Activated B cell treated with CpG ODN at 0.5 μM for 24 hours (primary cell): ENCODE measurements at regions of chr18 and their contacts with region 1.

Region 1: DNA sequence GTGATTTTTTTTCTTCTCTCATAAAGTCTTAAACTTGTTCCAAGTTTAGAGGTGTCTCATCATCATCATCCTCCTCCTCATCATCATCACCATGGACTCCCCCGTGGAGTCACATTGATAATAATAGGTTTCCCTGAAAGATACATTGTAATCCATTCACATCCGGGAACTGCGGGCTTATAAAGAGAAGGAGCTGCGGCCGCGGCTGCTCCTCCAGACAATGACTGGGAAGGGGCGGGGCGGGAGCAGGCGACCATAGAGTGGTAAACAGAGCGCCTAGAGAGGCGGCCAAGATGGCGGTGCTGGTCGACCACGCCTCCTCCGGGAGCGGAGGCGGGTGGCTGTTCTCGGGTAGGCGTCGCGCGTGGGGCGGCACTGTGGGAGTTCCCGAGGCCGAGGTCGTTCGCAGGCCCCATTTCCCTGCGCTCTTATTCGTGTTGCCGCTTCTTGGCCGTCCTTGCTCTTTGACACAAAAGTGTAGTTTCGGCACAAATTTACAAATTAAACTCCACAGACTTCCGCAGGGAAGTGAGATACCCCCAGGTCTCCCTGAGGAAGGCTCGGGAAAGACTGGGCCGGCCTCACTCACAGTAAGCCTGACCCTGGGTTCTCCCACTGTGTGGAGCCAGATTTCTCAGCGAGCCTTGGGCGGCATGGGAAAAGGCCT is 1.8 kb upstream of the TCF4 start:
- DNase-seq: peak; percentile 84
- ATAC-seq: peak; percentile 86
- H3K4me3 Mint-ChIP-seq: peak overlapping the region; percentile 89
- H3K27ac Mint-ChIP-seq: peak overlapping the region; percentile 89
- H3K4me1 Mint-ChIP-seq: peaks cover 38% of the 10 kb centered on the region
- H3K27me3 Mint-ChIP-seq: peaks cover 4% of the 10 kb centered on the region
- CTCF ChIP-seq: no peak

Region 2: GRCh38 chr18:55119434-55119833 is 470.3 kb before region 1 on chr18:
- CTCF ChIA-PET with region 1: no interaction called
- POLR2A ChIA-PET with region 1: interaction called, 16 read pairs
- intact Hi-C with region 1: no loop called
- DNase-seq: no peak
- ATAC-seq: no peak
- H3K4me3 Mint-ChIP-seq: no peak overlapping the region
- H3K27ac Mint-ChIP-seq: no peak overlapping the region
- H3K4me1 Mint-ChIP-seq: peaks cover 21% of the 10 kb centered on the region
- H3K27me3 Mint-ChIP-seq: no peaks in the 10 kb centered on the region
- CTCF ChIP-seq: no peak

Region 3: GRCh38 chr18:55422456-55423180 is 167.1 kb before region 1 on chr18:
- CTCF ChIA-PET with region 1: no interaction called
- POLR2A ChIA-PET with region 1: interaction called, 6 read pairs
- intact Hi-C with region 1: loop called (anchors 1 kb)
- DNase-seq: no peak
- ATAC-seq: no peak
- H3K4me3 Mint-ChIP-seq: peak overlapping the region; percentile 84
- H3K27ac Mint-ChIP-seq: peak overlapping the region; percentile 75
- H3K4me1 Mint-ChIP-seq: peaks cover 64% of the 10 kb centered on the region
- H3K27me3 Mint-ChIP-seq: peaks cover 2% of the 10 kb centered on the region
- CTCF ChIP-seq: no peak

Region 4: GRCh38 chr18:55509631-55510324 is 80.0 kb before region 1 on chr18:
- CTCF ChIA-PET with region 1: no interaction called
- POLR2A ChIA-PET with region 1: interaction called, 6 read pairs
- intact Hi-C with region 1: loop called (anchors 1 kb)
- DNase-seq: no peak
- ATAC-seq: peak; percentile 82
- H3K4me3 Mint-ChIP-seq: peak overlapping the region; percentile 61
- H3K27ac Mint-ChIP-seq: peak overlapping the region; percentile 68
- H3K4me1 Mint-ChIP-seq: peaks cover 56% of the 10 kb centered on the region
- H3K27me3 Mint-ChIP-seq: no peaks in the 10 kb centered on the region
- CTCF ChIP-seq: no peak

Region 5: GRCh38 chr18:55605733-55606338 is 16.1 kb after region 1 on chr18:
- CTCF ChIA-PET with region 1: no interaction called
- POLR2A ChIA-PET with region 1: interaction called, 7 read pairs
- intact Hi-C with region 1: loop called (anchors 1 kb)
- DNase-seq: no peak
- ATAC-seq: peak; percentile 92
- H3K4me3 Mint-ChIP-seq: peak overlapping the region; percentile 21
- H3K27ac Mint-ChIP-seq: peak overlapping the region; percentile 76
- H3K4me1 Mint-ChIP-seq: peaks cover 31% of the 10 kb centered on the region
- H3K27me3 Mint-ChIP-seq: no peaks in the 10 kb centered on the region
- CTCF ChIP-seq: no peak

Region 6: GRCh38 chr18:55900380-55900779 is 310.6 kb after region 1 on chr18:
- CTCF ChIA-PET with region 1: no interaction called
- POLR2A ChIA-PET with region 1: no interaction called
- intact Hi-C with region 1: no loop called
- DNase-seq: no peak
- ATAC-seq: no peak
- H3K4me3 Mint-ChIP-seq: no peak overlapping the region
- H3K27ac Mint-ChIP-seq: no peak overlapping the region
- H3K4me1 Mint-ChIP-seq: no peaks in the 10 kb centered on the region
- H3K27me3 Mint-ChIP-seq: no peaks in the 10 kb centered on the region
- CTCF ChIP-seq: no peak

Region 7: GRCh38 chr18:56321470-56321869 is 731.7 kb after region 1 on chr18:
- CTCF ChIA-PET with region 1: no interaction called
- POLR2A ChIA-PET with region 1: no interaction called
- intact Hi-C with region 1: loop called (anchors 5 kb)
- DNase-seq: no peak
- ATAC-seq: no peak
- H3K4me3 Mint-ChIP-seq: no peak overlapping the region
- H3K27ac Mint-ChIP-seq: peak overlapping the region; percentile 20
- H3K4me1 Mint-ChIP-seq: peaks cover 47% of the 10 kb centered on the region
- H3K27me3 Mint-ChIP-seq: no peaks in the 10 kb centered on the region
- CTCF ChIP-seq: no peak

Region 8: GRCh38 chr18:56650944-56651770 is 1061.4 kb after region 1 on chr18 and contains the start of gene WDR7:
- CTCF ChIA-PET with region 1: no interaction called
- POLR2A ChIA-PET with region 1: interaction called, 6 read pairs
- intact Hi-C with region 1: loop called (anchors 5 kb)
- DNase-seq: peak; percentile 81
- ATAC-seq: peak; percentile 93
- H3K4me3 Mint-ChIP-seq: peak within 1 kb of the TSS; percentile 92
- H3K27ac Mint-ChIP-seq: peak within 1 kb of the TSS; percentile 92
- H3K4me1 Mint-ChIP-seq: peaks cover 36% of the 10 kb centered on the region
- H3K27me3 Mint-ChIP-seq: no peaks in the 10 kb centered on the region
- CTCF ChIP-seq: no peak
- total RNA-seq, gene WDR7: 26.0 and 33.4 TPM in 2 replicates